Posterior cingulate gyrus (tissue), 11 donors: ENCODE measurements at regions of chr13 and their contacts with region 1.

Region 1: GRCh38 chr13:77599351-77599750 is 63.8 kb downstream of the SCEL start:
- DNase-seq: no peak

Region 2: GRCh38 chr13:77584106-77584505 is 15.2 kb before region 1 on chr13:
- intact Hi-C with region 1: no loop called
- DNase-seq: peak; percentile 63 to 96 (median 85)

Region 3: GRCh38 chr13:77697217-77698103 is 98.1 kb after region 1 on chr13 and contains the start of gene SLAIN1:
- intact Hi-C with region 1: loop called (anchors 5 kb)
- DNase-seq: peak; percentile 83 to 98 (median 90)

Region 4: GRCh38 chr13:78121459-78122348 is 522.4 kb after region 1 on chr13:
- intact Hi-C with region 1: loop called (anchors 2 kb)
- DNase-seq: peak in 7 of 10 donors; percentile 37 to 79 (median 51)